ENCODE measurements at regions of chr4 and their contacts with region 1.

Region 1: GRCh38 chr4:83639849-83640493 is 104.1 kb downstream of the GPAT3 start:
- DNase-seq: peak; percentile 64
- CTCF ChIP-seq: peak; percentile 81

Region 2: DNA sequence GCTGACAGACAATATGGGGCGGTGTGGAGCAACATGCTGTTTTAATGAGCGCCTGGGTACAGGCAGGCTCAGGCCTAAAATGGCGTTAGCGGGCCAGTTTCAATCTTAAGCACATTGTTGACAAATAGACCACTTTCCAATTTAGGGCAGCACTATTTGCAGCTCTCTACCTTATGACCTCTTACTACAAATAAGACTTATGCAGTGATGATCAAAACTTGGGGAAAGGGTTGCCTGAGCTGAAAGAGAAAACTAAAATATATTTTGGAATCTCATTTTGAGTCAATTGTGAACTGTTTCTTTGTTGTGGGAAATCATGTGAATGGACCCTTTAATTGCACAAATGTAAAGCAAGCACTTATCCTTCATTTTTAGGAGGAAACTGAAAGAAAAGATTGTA is 129.5 kb before region 1 on chr4:
- CTCF ChIA-PET with region 1: interaction called, 51 read pairs
- POLR2A ChIA-PET with region 1: no interaction called
- DNase-seq: no peak
- CTCF ChIP-seq: no peak

Region 3: GRCh38 chr4:83651502-83652245 is 11.7 kb after region 1 on chr4:
- CTCF ChIA-PET with region 1: interaction called, 40 read pairs
- POLR2A ChIA-PET with region 1: no interaction called
- DNase-seq: no peak
- CTCF ChIP-seq: no peak

Region 4: GRCh38 chr4:83658806-83659495 is 19.0 kb after region 1 on chr4:
- CTCF ChIA-PET with region 1: interaction called, 40 read pairs
- POLR2A ChIA-PET with region 1: no interaction called
- DNase-seq: no peak
- CTCF ChIP-seq: no peak

Region 5: DNA sequence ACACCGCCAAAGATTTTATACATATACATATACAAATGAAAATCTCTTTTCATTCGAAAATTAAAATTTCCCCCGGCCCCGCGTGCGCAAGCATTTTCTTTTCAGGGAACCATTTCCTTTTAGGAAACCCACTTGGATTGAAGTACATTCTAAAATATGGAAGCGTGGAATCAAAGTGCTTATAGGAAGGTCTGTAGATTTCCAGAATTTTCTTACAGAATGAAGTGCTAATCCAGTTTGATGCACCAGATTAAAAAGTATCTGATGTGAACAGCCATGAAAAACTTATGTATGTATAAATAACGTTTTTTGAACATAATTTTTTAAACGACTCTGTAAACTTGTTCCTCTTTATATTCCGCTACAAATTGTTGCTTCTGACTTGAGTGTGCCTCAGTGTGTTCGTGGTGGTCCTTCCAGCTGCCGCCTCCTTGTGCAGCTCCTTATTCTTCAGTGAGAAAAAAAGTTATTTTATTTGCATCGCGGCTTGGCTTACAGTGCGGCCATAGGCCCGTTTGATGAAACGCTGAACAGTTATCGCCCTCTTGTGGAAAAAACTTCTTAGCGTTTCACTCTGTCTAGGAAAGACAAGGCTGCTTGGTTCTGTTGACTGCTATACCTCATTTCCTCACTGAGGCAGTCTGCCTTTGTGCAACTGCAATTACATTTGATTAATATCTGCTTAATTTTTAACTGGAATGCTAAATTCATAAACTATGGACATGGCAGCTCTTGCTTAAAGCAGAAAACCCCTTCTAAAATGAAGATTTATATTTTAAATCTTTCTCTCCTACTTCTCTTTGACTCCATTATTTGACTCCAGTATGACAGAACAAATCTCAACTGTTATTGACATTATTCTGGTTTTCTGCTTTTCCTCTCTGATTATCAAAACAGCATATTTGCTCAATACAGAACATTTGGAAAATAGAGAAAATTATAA is 863.8 kb after region 1 on chr4:
- CTCF ChIA-PET with region 1: interaction called, 13 read pairs
- POLR2A ChIA-PET with region 1: no interaction called
- DNase-seq: no peak
- CTCF ChIP-seq: peak; percentile 55

Region 6: GRCh38 chr4:84529169-84529751 is 889.3 kb after region 1 on chr4:
- CTCF ChIA-PET with region 1: interaction called, 21 read pairs
- POLR2A ChIA-PET with region 1: no interaction called
- DNase-seq: peak; percentile 22
- CTCF ChIP-seq: peak; percentile 48

Region 7: GRCh38 chr4:84971319-84971932 is 1331.5 kb after region 1 on chr4:
- CTCF ChIA-PET with region 1: interaction called, 15 read pairs
- POLR2A ChIA-PET with region 1: no interaction called
- DNase-seq: peak; percentile 29
- CTCF ChIP-seq: peak; percentile 34

Measured in GM10248 (cell line).